ENCODE measurements at regions of chr6 and their contacts with region 1.

Region 1: DNA sequence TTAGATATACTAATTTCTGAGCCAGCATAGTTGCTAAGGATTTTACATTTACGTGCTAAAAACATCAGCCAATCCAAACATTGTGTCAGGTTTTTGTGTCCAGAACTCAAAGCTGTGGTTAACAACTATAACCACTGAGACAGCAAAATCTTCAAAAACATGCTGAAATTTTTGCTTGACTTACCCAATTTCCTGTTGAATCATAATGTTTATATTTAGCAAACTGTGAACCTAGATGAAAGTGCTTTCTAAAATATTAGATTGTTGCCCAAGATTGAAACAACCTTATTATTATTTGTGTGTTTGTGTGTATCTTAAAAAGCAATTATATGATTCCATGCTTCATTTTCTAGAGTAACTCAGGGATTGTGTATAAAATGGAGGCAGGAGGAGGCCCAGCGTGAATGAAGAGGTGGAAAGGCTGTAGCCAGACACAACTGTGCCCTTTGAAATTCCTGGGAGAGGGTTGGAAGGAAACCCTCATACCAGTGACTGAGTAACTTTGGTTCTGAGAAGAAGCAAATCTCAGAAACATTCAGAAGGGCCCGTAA is 48.0 kb downstream of the ARMC2 start:
- DNase-seq: no peak

Region 2: DNA sequence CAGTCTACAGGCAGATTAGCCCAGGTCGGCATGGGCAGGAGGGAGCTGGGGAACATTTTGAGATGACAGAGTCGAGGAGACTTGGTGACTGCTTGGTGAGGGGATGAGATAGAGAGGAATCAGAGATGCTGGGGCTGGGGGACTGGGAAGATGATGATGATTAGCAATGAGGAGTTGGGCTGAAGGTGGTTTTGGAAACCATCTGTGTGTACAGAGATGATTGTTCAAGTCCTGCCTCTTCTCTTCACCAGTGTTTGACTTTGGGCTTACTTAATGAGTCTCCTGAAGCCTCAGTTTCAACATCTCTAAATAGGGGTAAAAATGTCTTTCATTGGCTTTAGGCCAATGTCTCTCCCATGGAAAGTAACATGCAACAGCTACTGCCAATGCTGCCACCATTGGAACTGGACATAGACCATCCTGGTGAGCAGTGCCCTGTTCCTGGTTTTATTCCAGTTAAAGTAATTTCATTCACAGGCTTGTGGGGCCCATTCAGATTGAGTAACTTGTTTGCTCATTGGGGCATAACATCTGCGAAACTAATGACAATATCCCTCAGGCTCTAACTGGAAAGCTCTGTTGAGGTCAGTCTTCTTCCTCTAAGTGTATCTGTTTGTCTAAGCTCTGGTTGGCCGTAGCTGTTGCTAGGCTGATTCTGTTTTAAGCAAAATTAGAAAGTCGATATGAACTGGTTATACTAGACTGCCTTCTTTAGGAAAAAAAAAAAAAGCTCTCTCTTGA is 51.1 kb after region 1 on chr6:
- intact Hi-C with region 1: no loop called
- DNase-seq: no peak

Region 3: GRCh38 chr6:109073344-109074132 is 177.4 kb after region 1 on chr6:
- intact Hi-C with region 1: loop called (anchors 5 kb)
- DNase-seq: peak in 2 of 10 donors; percentile 17 to 23

Region 4: DNA sequence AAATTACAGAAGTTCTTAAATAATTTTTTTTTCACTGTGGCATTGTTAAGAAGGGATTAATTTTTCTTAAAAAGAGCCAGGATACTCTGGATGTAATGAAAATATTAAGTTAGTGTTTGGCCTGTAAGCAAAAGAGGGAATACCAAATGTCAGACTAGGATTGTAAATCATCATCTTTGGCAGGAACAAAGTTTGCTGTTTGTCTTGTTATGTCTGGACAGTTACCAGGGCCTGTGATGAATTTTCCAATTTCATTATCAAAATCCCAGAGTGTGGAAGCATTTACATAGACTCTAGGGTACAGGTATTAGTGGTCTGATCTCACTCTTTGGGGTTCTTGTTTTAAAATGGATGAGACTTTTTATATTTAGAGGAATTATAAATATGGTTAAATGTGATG is 225.2 kb after region 1 on chr6:
- intact Hi-C with region 1: no loop called
- DNase-seq: no peak

Measured in posterior cingulate gyrus (tissue), 11 donors.